Activated CD4-positive, alpha-beta T cell treated with anti-CD3 and anti-CD28 coated beads, Interleukin-2, amount 10 ng/mL, durations not matched to agents 24 days and 14 days (primary cell): ENCODE measurements at regions of chr15 and their contacts with region 1.

Region 1: GRCh38 chr15:83248151-83249029 is 36.1 kb downstream of the BNC1 start:
- DNase-seq: peak; percentile 84
- H3K4me3 Mint-ChIP-seq: no peak overlapping the region
- H3K27ac Mint-ChIP-seq: no peak overlapping the region
- H3K4me1 Mint-ChIP-seq: no peaks in the 10 kb centered on the region
- H3K27me3 Mint-ChIP-seq: peaks cover 51% of the 10 kb centered on the region

Region 2: GRCh38 chr15:83185561-83185960 is 62.8 kb before region 1 on chr15:
- intact Hi-C with region 1: no loop called
- DNase-seq: no peak
- H3K4me3 Mint-ChIP-seq: no peak overlapping the region
- H3K27ac Mint-ChIP-seq: no peak overlapping the region
- H3K4me1 Mint-ChIP-seq: no peaks in the 10 kb centered on the region
- H3K27me3 Mint-ChIP-seq: peaks cover 17% of the 10 kb centered on the region

Region 3: GRCh38 chr15:83380682-83381081 is 132.3 kb after region 1 on chr15:
- intact Hi-C with region 1: loop called (anchors 5 kb)
- DNase-seq: peak; percentile 81
- H3K4me3 Mint-ChIP-seq: no peak overlapping the region
- H3K27ac Mint-ChIP-seq: no peak overlapping the region
- H3K4me1 Mint-ChIP-seq: peaks cover 6% of the 10 kb centered on the region
- H3K27me3 Mint-ChIP-seq: peaks cover 34% of the 10 kb centered on the region

Region 4: GRCh38 chr15:83436458-83437158 is 188.2 kb after region 1 on chr15:
- intact Hi-C with region 1: loop called (anchors 1 kb)
- DNase-seq: peak; percentile 49
- H3K4me3 Mint-ChIP-seq: no peak overlapping the region
- H3K27ac Mint-ChIP-seq: no peak overlapping the region
- H3K4me1 Mint-ChIP-seq: peaks cover 4% of the 10 kb centered on the region
- H3K27me3 Mint-ChIP-seq: peaks cover 9% of the 10 kb centered on the region

Region 5: DNA sequence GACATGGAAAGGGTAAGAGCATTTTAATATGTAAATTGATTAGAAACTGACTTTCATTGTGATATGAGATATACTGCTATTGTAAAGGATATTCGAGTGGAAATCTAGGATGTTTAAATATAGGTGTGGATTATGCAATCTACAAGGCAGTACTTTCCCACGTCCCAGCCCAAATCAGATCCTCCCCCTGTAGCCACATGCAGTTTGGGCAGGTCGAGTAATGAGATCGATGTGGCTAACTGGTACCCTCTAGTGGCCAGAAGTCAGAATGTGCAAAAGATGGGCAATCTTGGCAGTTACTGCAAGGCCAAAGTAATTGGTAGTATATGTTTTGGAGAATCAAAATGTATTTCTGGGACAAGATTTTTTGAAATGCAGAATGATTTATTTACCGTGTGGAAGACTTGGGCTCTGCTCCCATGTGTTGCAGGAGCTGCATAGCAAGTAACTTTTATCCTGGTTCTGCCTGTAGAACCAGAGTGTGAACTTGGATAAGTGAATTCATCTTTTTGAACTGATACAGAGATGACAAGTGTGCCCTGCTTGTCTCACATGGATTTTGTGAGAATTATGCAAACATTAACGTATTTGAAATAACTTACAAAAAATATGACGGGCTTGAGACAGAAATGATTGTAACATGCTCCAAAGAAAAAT is 311.0 kb after region 1 on chr15:
- intact Hi-C with region 1: loop called (anchors 1 kb)
- DNase-seq: peak; percentile 85
- H3K4me3 Mint-ChIP-seq: no peak overlapping the region
- H3K27ac Mint-ChIP-seq: no peak overlapping the region
- H3K4me1 Mint-ChIP-seq: no peaks in the 10 kb centered on the region
- H3K27me3 Mint-ChIP-seq: peaks cover 3% of the 10 kb centered on the region

Region 6: DNA sequence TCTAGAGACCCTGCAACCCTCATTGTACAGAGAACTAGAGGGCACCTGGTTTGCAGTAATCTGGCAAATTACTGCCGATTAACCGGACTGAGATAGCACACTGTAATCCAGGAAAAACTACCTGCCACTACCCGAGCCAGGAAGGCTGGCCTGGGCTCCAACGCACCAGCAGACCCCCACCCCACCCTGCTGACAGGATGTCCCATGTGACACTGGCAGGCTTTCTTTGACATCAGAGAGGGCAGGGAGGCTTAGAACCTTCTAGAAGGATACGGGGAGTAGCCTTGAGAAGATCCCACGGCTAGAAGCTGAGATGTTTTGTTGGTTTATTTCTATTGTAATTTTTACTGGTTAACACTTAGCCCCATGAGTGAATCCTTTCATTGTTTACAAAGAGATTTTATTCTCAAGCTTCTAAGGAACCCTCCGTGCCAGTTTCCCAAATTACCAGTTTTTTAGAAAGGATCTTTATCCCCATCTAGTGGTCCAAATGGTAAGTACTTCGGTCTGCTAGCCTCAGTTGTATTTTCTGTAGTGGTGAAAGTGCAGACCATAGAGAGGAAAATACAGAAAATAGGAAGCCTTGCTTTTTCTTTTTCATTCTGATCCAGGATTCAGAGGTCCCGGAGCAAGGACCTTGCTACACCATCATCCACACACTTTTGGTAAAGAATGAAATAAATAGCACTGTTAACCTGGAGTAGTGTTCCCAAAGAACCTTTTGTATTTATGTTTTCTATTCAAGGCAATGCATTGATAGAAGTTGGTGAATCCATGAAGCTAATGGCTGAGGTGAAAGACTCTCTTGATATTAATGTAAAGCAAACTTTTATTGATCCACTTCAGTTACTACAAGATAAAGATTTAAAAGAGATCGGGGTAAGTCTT is 323.7 kb after region 1 on chr15:
- intact Hi-C with region 1: loop called (anchors 5 kb)
- DNase-seq: no peak
- H3K4me3 Mint-ChIP-seq: no peak overlapping the region
- H3K27ac Mint-ChIP-seq: no peak overlapping the region
- H3K4me1 Mint-ChIP-seq: no peaks in the 10 kb centered on the region
- H3K27me3 Mint-ChIP-seq: no peaks in the 10 kb centered on the region